PC-9 (cell line): ENCODE measurements at regions of chr3 and their contacts with region 1.

Region 1: GRCh38 chr3:17039580-17039979 is 154.8 kb downstream of the PLCL2 start:
- DNase-seq: peak; percentile 56 to 98
- H3K4me3 ChIP-seq: no peak overlapping the region
- H3K27ac ChIP-seq: peak overlapping the region; percentile 90
- H3K4me1 ChIP-seq: peaks cover 45% of the 10 kb centered on the region
- H3K27me3 ChIP-seq: no peaks in the 10 kb centered on the region
- CTCF ChIP-seq: no peak

Region 2: DNA sequence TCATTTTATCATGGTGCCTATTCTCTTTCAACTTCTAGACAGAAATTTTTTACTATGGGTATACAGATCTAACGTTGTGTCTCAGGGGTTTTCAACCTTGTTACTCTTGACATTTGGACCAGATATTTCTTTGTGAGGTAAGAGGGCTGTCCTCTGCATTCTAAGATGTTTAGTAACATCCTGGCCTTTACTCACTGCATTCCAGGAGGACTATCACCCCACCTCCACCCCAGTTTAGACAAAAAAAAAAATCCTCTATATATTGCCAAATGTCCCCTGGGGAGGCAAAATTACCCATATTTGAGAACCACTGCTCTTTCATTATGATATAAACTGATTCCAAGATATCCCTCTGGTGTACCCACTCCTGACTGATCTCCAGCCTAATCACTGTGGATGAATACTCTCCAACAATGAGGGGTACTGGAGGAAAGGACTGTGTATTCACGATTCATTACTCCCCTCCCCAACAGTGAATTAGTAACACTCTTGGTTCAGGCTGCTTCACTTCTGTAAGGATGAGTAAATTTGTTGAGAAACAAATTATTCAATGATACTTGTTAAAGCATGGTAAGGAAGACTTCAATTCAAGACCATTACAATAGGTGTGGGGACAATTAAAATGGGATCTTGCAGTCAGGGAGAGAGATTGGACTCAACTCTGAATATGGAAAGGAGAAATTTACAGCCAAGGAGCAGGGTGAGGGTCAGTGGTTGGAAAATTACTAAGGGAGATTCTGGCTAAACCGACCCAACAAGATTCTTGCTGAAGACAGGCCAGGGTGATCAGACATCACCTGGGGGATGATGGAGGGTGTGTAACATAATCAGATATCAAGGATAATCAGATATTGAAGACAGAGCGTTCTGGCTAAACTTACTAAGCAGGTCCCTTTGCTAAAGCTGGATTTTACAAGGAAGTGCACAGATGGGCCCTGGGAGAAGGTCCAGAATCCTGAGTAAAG is 310.5 kb before region 1 on chr3:
- CTCF ChIA-PET with region 1: no interaction called
- POLR2A ChIA-PET with region 1: no interaction called
- intact Hi-C with region 1: loop called (anchors 2 kb)
- DNase-seq: peak; percentile 45 to 76
- H3K4me3 ChIP-seq: peak overlapping the region; percentile 36
- H3K27ac ChIP-seq: peak overlapping the region; percentile 95
- H3K4me1 ChIP-seq: peaks cover 38% of the 10 kb centered on the region
- H3K27me3 ChIP-seq: no peaks in the 10 kb centered on the region
- CTCF ChIP-seq: no peak

Region 3: DNA sequence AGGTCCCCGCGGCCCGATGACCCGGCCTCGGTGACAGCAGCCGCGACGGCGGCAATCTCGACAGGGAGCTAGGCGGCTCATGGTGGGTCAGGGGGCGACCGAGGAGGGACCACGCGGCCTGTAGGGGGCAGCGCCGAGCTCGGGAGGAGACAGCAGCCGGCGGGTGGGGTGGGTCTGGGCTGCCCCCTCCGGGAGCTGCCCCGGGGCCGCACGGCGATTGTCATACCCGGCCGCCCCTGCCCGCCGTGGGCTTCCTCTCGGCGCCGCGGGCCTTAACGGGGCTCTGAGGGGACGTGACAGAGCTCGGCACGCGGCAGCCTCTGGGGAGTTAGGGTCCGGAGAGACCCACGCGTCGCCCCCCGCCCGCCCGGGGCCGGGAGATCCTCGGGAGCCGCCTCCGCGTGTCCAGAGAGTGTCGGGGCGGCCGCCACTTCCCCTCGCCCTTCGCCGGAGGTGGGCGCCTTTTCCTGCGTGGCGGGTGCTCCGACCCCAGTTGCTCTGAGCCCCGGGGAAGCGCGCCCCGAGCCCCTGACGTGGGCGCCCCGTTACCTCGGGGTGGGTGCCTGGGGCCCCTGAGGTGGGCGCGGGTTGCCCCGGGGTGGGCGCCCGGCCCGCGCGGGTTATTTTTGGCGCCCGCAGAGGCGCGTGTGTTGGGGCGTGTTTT is 155.4 kb before region 1 on chr3:
- CTCF ChIA-PET with region 1: no interaction called
- POLR2A ChIA-PET with region 1: no interaction called
- intact Hi-C with region 1: loop called (anchors 2 kb)
- DNase-seq: peak in 1 of 2 experiments; percentile 19
- H3K4me3 ChIP-seq: peak overlapping the region; percentile 98
- H3K27ac ChIP-seq: no peak overlapping the region
- H3K4me1 ChIP-seq: peaks cover 27% of the 10 kb centered on the region
- H3K27me3 ChIP-seq: no peaks in the 10 kb centered on the region
- CTCF ChIP-seq: peak; percentile 57; the same call in 1 of the 2 replicates

Region 4: GRCh38 chr3:16994854-16995537 is 44.6 kb before region 1 on chr3:
- CTCF ChIA-PET with region 1: no interaction called
- POLR2A ChIA-PET with region 1: no interaction called
- intact Hi-C with region 1: loop called (anchors 1 kb)
- DNase-seq: peak; percentile 29 to 67
- H3K4me3 ChIP-seq: no peak overlapping the region
- H3K27ac ChIP-seq: no peak overlapping the region
- H3K4me1 ChIP-seq: peaks cover 15% of the 10 kb centered on the region
- H3K27me3 ChIP-seq: no peaks in the 10 kb centered on the region
- CTCF ChIP-seq: no peak

Region 5: GRCh38 chr3:17055374-17056276 is 16.0 kb after region 1 on chr3:
- CTCF ChIA-PET with region 1: no interaction called
- POLR2A ChIA-PET with region 1: no interaction called
- intact Hi-C with region 1: no loop called
- DNase-seq: no peak
- H3K4me3 ChIP-seq: no peak overlapping the region
- H3K27ac ChIP-seq: no peak overlapping the region
- H3K4me1 ChIP-seq: no peaks in the 10 kb centered on the region
- H3K27me3 ChIP-seq: no peaks in the 10 kb centered on the region
- CTCF ChIP-seq: no peak